Tibial artery (tissue), 4 donors: ENCODE measurements at regions of chr7 and their contacts with region 1.

Region 1: DNA sequence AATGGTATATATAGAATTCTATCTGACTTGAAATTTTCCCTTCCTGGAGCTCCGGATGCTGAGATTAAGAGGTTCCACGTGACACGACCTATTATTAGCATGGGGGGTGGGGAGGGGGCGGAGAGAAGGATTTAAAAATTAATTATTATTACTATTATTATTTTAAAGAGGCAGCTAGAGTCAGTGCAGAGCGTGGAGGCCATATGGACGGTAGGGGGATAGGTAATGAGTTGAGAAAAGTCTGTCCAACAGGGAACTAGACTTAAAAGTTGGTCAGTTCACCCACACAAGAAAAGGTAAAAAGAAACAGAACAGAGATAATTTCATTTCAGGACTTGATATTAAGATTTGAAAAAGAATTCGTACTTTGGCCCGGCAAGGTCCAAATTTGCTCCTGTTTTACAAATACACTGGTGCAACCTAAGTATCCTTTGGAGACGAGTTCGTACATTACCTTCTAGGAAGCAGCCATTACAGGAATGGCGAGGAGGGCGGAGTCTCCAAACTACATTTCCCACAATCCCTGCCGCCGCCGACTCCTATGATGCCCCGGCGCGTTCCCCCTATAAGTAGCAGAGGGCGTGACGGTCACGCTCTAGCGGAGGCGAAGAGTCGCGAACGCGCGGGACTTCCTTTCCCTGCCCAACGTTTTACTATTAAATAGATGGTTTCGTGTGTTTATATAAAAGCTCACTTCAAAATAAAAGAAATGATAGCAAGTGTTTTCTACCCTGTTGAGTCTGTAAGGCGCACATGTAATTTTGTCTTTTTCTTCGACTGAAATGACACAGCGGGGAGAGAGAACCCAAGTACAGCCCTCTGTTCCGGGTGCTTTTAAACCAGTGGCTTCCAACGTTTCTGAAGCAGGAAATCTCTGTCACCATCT is at the start of gene SMIM30:
- DNase-seq: peak; percentile 95 to 97
- H3K4me3 ChIP-seq: peak within 1 kb of the TSS; percentile 52 to 67
- H3K27ac ChIP-seq: peak within 1 kb of the TSS; percentile 59 to 74
- H3K4me1 ChIP-seq: peaks cover 0 to 8% (median 6%) of the 10 kb centered on the region in 4 donors
- H3K27me3 ChIP-seq: no peaks in the 10 kb centered on the region
- CTCF ChIP-seq: no peak

Region 2: DNA sequence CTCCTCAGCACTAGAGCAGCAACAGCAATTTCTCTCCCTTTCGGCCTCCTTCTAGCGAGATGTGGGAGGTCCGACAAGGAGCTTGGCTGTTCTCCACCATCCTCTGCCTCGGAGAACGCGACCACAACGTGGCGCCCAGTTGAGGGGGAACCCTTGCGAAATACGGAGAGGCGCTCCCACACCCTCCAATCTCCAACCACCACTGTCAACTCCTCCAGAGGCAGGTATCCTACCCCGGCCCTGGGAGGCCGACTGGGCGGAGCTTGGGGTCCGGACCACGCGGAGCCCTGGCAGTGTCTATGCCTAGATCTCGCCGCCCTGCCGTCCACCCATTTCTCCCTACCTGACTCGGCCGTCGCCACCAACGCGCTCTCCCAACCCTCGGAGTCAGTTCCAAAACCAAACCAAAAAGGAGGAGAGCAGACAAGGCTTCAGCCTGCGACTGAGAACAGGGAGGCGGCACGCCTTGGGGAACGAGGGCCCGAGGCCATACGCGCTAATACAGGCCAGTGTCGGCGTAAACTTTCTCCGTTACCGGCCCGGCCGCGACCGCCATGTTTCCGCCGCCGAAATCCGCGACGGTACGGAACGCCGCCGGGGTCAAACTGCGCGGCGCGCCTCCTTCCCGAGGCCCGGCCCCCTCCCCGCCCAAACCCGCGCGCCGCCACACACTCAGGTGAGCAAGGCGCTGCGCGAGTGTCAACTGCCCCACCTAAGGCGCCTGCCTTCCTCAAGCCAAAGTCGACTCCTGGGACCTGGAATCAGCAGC is 328.3 kb before region 1 on chr7 and contains the start of gene TMEM168:
- intact Hi-C with region 1: loop called (anchors 10 kb)
- DNase-seq: peak; percentile 60 to 85
- H3K4me3 ChIP-seq: peak within 1 kb of the TSS; percentile 79 to 92
- H3K27ac ChIP-seq: peak within 1 kb of the TSS; percentile 82 to 93
- H3K4me1 ChIP-seq: peaks cover 0 to 18% (median 9%) of the 10 kb centered on the region in 4 donors
- H3K27me3 ChIP-seq: no peaks in the 10 kb centered on the region
- CTCF ChIP-seq: peak in 1 of 2 experiments; percentile 9

Region 3: GRCh38 chr7:112939574-112940314 is 178.6 kb before region 1 on chr7:
- intact Hi-C with region 1: loop called (anchors 5 kb)
- DNase-seq: peak; percentile 99 to 100
- H3K4me3 ChIP-seq: peak overlapping the region; percentile 91
- H3K27ac ChIP-seq: peak overlapping the region; percentile 77 to 84
- H3K4me1 ChIP-seq: peaks cover 0 to 26% (median 13%) of the 10 kb centered on the region in 4 donors
- H3K27me3 ChIP-seq: no peaks in the 10 kb centered on the region
- CTCF ChIP-seq: no peak